Aorta (tissue), 5 donors: ENCODE measurements at regions of chr14 and their contacts with region 1.

Region 1: DNA sequence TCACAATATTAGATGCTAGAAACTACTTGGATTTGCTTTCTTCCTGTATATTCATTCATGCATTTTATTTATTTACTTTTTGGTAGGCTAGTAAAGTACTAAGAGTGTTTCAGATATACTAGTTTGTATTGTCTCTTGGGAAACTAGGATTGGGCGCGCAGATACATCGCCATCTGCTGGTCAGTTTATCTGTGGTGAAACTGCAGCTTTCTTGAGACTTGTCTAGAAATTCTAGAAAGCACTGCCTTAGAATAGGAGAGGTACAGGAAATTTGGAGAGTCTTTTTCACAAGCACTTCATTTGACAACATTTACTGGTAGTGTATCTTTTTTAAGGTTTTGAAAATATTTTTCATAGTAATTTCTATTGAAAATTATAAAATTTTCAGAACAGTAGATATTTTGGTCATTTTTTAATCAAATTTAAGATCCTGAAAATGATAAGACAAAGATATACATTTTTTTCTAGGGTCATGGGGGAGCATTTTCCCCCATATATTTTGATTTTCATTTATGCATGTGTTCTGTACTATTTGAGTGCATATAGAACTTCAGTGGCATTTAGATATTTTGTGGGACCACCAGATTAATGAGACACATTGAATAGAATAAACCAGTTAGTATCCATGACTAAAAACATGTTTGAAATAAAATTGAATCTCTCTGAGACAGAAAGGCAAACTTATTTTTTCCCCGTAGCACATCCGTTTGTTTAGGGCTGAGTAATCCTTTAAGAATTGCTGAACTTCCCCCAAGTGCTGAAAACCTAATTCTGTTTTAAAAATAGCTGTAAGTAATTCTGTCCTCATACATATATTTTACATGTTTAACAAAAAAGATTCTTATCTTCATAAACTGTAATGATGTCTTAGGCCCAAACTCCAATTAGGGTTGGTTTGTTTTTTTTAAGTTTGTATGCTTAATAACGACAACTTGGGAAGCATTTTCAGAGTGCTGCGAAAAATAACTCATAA is 44.5 kb downstream of the SLC38A6 start:
- DNase-seq: peak; percentile 59 to 74
- ATAC-seq: peak; percentile 72
- H3K4me3 ChIP-seq: no peak overlapping the region
- H3K27ac ChIP-seq: no peak overlapping the region
- H3K4me1 ChIP-seq: no peaks in the 10 kb centered on the region
- H3K27me3 ChIP-seq: no peaks in the 10 kb centered on the region

Region 2: GRCh38 chr14:60622917-60623257 is 402.6 kb before region 1 on chr14:
- intact Hi-C with region 1: loop called (anchors 1 to 2 kb)
- DNase-seq: no peak
- ATAC-seq: peak; percentile 75
- H3K4me3 ChIP-seq: no peak overlapping the region
- H3K27ac ChIP-seq: no peak overlapping the region
- H3K4me1 ChIP-seq: no peaks in the 10 kb centered on the region
- H3K27me3 ChIP-seq: no peaks in the 10 kb centered on the region

Region 3: GRCh38 chr14:60724137-60724619 is 301.4 kb before region 1 on chr14 and contains the start of gene SIX4:
- intact Hi-C with region 1: loop called in 1 of 2 experiments (anchors 10 kb)
- DNase-seq: peak; percentile 73 to 89
- ATAC-seq: peak; percentile 81
- H3K4me3 ChIP-seq: peak within 1 kb of the TSS; percentile 19 to 74
- H3K27ac ChIP-seq: no peak within 1 kb of the TSS
- H3K4me1 ChIP-seq: no peaks in the 10 kb centered on the region
- H3K27me3 ChIP-seq: no peaks in the 10 kb centered on the region
- total RNA-seq, gene SIX4: 3.0 to 6.0 TPM

Region 4: GRCh38 chr14:61188978-61189808 is 163.7 kb after region 1 on chr14:
- intact Hi-C with region 1: loop called in 1 of 2 experiments (anchors 10 kb)
- DNase-seq: peak; percentile 80 to 88
- ATAC-seq: peak; percentile 90
- H3K4me3 ChIP-seq: peak overlapping the region; percentile 29 to 30
- H3K27ac ChIP-seq: peak overlapping the region in 1 of 2 donors; percentile 4
- H3K4me1 ChIP-seq: no peaks in the 10 kb centered on the region
- H3K27me3 ChIP-seq: no peaks in the 10 kb centered on the region

Region 5: DNA sequence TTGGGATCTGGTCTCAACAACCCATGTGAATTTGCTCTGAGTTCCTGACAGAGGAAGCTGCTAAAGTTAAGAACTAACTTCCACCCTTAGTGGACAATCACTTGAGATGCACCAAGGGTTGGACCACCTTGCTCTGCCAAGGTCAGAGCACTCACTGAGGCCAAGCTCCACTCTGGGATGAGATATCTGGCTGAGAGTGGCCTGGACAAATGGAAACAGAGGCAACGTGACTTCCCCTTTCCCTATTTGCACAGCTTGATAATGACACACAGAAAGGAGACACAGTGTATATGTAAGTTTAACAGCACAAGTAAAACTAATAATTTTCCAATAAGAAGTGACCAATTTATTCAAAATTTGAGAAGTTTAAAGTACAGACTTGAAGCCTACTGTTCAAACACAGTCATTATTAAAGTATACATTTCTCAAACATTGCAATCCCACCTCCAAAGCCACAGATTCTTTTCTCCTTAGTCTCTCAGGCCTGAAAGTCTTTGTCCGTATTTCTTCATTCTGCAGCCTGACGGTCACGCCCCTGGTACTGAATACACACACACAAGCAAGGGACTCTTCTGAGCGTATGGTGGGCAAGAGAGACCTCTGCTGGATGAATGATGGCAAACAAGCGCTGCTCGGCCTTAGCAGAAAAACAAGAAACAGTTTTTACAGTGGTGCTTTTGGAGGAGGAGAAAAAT is 227.0 kb after region 1 on chr14:
- intact Hi-C with region 1: loop called (anchors 2 to 5 kb)
- DNase-seq: peak in 1 of 2 donors; percentile 83
- ATAC-seq: peak; percentile 94
- H3K4me3 ChIP-seq: no peak overlapping the region
- H3K27ac ChIP-seq: no peak overlapping the region
- H3K4me1 ChIP-seq: no peaks in the 10 kb centered on the region
- H3K27me3 ChIP-seq: no peaks in the 10 kb centered on the region

Region 6: DNA sequence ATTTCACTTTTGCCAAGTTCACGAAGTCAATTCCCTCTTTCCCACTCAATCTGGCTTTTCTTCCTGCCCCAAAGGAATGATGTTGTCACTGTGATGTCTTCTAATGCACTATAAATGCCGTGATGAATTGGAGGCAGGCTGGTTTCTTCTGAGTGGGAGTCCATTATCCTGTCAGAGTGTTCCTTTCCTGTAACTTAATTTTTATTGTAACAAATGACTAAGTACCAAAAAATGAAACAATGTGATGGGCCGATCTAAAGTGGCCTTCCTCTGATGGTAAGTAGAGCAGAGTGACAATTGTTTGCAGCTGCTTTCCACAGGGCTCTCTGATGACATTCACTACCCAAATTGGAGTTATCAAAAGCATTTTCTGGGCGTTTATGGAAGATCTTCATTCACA is 233.4 kb after region 1 on chr14:
- intact Hi-C with region 1: loop called in 1 of 2 experiments (anchors 5 kb)
- DNase-seq: no peak
- ATAC-seq: no peak
- H3K4me3 ChIP-seq: no peak overlapping the region
- H3K27ac ChIP-seq: no peak overlapping the region
- H3K4me1 ChIP-seq: no peaks in the 10 kb centered on the region
- H3K27me3 ChIP-seq: no peaks in the 10 kb centered on the region